ENCODE measurements at regions of chr6 and their contacts with region 1.

Region 1: GRCh38 chr6:40845553-40845952 is 193.5 kb downstream of the UNC5CL start:
- DNase-seq: no peak
- ATAC-seq: peak; percentile 74
- H3K4me3 ChIP-seq: no peak overlapping the region
- H3K27ac ChIP-seq: no peak overlapping the region
- H3K4me1 ChIP-seq: no peaks in the 10 kb centered on the region
- H3K27me3 ChIP-seq: peaks cover 2 to 10% of the 10 kb centered on the region in 2 experiments; a peak in 3 of 4 replicates
- CTCF ChIP-seq: peak; percentile 64 to 73 (median 66)
- EP300 ChIP-seq: no peak
- POLR2A ChIP-seq: no peak
- RAD21 ChIP-seq: peak; percentile 55

Region 2: DNA sequence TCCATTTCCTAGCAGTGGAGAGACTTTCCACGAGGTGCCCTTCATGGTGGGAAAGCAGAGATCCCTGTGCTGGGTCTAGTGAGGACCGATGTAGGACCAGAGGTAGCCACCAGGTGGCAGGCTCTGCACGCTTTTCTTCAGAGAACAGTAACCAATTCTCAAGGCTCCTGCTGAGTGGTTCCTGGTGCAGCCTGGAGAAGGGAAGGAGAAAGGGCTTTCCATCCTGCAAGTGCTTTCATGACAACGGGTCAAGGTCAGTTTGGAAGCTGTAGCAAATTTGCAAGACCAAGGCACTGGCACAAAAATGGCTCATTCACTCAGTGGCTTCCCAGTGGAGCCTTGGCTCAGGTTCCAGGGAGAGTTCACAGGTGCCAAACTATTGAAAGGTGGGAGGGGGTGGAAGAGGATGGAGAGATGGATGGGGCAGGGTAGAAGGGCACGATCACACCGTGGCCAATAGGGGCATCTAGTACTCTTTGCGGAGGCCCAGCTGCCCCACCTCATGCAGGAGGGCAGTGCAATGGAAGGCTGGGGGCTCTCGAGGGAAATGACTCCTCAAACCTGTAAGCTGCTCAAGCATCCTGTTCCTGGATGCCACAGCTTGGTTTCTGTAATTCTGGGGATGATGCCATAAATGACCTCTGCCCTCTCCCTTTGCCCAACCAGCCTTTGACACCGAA is 1497.5 kb before region 1 on chr6:
- CTCF ChIA-PET with region 1: no interaction called
- POLR2A ChIA-PET with region 1: no interaction called
- RAD21 ChIA-PET with region 1: no interaction called
- SMC1A ChIA-PET with region 1: no interaction called
- in situ Hi-C with region 1: no loop called
- intact Hi-C with region 1: loop called (anchors 5 kb)
- DNase-seq: no peak
- ATAC-seq: peak; percentile 96
- H3K4me3 ChIP-seq: no peak overlapping the region
- H3K27ac ChIP-seq: no peak overlapping the region
- H3K4me1 ChIP-seq: peaks cover 2% of the 10 kb centered on the region
- H3K27me3 ChIP-seq: no peaks in the 10 kb centered on the region
- CTCF ChIP-seq: peak; percentile 86 to 93 (median 92)
- EP300 ChIP-seq: no peak
- POLR2A ChIP-seq: no peak
- RAD21 ChIP-seq: peak; percentile 78

Region 3: GRCh38 chr6:39980839-39981580 is 864.5 kb before region 1 on chr6:
- CTCF ChIA-PET with region 1: interaction called, 10 read pairs
- POLR2A ChIA-PET with region 1: no interaction called
- RAD21 ChIA-PET with region 1: no interaction called
- SMC1A ChIA-PET with region 1: interaction called, 4 read pairs
- in situ Hi-C with region 1: no loop called
- intact Hi-C with region 1: no loop called
- DNase-seq: no peak
- ATAC-seq: peak; percentile 79
- H3K4me3 ChIP-seq: no peak overlapping the region
- H3K27ac ChIP-seq: no peak overlapping the region
- H3K4me1 ChIP-seq: no peaks in the 10 kb centered on the region
- H3K27me3 ChIP-seq: no peaks in the 10 kb centered on the region; a peak in 1 of 4 replicates
- CTCF ChIP-seq: peak; percentile 22 to 68 (median 30); a peak in 4 of 6 replicates
- EP300 ChIP-seq: no peak
- POLR2A ChIP-seq: no peak
- RAD21 ChIP-seq: peak; percentile 62

Region 4: DNA sequence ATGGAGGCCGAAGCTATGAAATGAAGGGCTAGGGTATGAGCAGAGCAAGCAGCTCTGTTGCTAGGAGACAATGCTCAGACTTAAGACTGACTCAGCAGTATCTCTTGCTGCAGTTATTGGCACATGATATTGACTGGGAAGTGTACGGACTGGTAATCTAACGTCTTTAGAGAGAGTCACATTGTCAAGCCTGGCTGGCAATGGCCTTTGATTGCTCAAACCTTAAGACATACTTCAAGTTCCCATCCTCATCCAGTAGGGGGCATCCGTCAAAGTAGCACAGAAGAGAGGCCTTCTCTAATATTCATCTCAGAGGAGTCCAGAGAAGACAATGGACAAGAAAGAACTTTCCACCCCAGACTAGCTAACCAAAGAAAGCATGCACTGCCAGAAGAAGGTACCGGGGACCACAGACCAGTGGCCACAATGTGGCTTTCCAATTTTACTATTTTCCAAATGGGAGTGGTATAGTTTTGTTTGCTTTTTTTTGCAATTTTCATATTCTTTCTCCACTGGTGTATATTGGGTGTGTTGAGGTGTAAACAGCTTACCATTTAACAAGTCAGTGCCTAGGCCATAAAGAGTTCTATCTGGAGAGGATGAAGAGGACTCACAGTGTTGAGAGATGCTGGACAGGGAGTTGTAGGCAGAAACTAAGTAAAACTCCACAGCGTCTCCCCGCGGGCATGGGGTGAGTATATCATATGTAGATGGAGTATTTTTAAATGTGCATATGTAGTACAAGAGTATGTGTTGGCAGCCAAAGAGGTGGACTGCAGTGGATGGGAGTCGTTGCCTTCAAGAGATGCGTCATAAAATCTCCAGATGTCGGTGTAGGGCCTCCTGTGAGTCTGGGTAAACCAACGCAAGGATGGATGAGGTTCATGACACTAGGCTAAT is 295.1 kb before region 1 on chr6:
- CTCF ChIA-PET with region 1: interaction called, 5 read pairs
- POLR2A ChIA-PET with region 1: no interaction called
- RAD21 ChIA-PET with region 1: interaction called, 3 read pairs
- SMC1A ChIA-PET with region 1: no interaction called
- in situ Hi-C with region 1: no loop called
- intact Hi-C with region 1: loop called (anchors 10 kb)
- DNase-seq: no peak
- ATAC-seq: peak; percentile 82
- H3K4me3 ChIP-seq: no peak overlapping the region
- H3K27ac ChIP-seq: no peak overlapping the region
- H3K4me1 ChIP-seq: no peaks in the 10 kb centered on the region
- H3K27me3 ChIP-seq: no peaks in the 10 kb centered on the region; a peak in 3 of 4 replicates
- CTCF ChIP-seq: peak; percentile 51 to 79 (median 68)
- EP300 ChIP-seq: no peak
- POLR2A ChIP-seq: no peak
- RAD21 ChIP-seq: peak; percentile 51

Region 5: GRCh38 chr6:40672097-40672496 is 173.5 kb before region 1 on chr6:
- CTCF ChIA-PET with region 1: no interaction called
- POLR2A ChIA-PET with region 1: no interaction called
- RAD21 ChIA-PET with region 1: no interaction called
- SMC1A ChIA-PET with region 1: no interaction called
- in situ Hi-C with region 1: no loop called
- intact Hi-C with region 1: loop called (anchors 5 kb)
- DNase-seq: no peak
- ATAC-seq: no peak
- H3K4me3 ChIP-seq: no peak overlapping the region
- H3K27ac ChIP-seq: no peak overlapping the region
- H3K4me1 ChIP-seq: no peaks in the 10 kb centered on the region
- H3K27me3 ChIP-seq: no peaks in the 10 kb centered on the region; a peak in 2 of 4 replicates
- CTCF ChIP-seq: peak in 1 of 3 experiments; percentile 8; a peak in 1 of 6 replicates
- EP300 ChIP-seq: no peak
- POLR2A ChIP-seq: no peak
- RAD21 ChIP-seq: no peak

Region 6: DNA sequence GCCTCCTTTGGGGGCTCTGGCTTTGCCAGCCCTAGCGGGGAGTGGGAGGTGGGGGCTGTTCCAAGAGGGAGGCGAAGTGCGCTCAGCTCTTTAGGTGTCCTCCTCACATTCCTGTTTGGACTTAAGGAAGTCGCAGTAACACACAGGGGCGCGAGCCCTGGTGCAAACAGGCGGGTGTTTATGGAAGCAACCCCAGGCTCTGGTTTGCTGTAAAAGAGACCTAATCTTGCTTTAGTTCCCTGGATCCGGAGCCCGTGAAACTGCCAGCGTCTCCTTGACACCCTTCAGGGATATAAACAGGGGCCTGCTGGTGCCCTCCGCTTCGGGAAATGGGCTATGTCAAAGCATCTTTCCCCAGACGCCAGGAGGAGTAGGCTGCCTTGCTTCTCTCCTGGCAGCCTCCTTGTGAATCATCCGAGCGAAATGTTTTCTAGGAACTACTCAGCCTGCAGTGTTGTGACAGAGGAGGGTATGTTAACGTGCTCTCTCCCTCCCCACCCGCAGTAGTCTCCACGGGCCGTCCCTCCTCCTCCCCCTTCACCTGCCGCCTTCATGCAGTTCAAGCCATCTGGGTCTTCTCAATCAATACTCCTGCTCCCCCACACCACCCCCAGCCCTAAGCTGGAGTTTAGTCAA is 90.4 kb before region 1 on chr6:
- CTCF ChIA-PET with region 1: no interaction called
- POLR2A ChIA-PET with region 1: no interaction called
- RAD21 ChIA-PET with region 1: no interaction called
- SMC1A ChIA-PET with region 1: no interaction called
- in situ Hi-C with region 1: no loop called
- intact Hi-C with region 1: no loop called
- DNase-seq: no peak
- ATAC-seq: no peak
- H3K4me3 ChIP-seq: no peak overlapping the region
- H3K27ac ChIP-seq: no peak overlapping the region
- H3K4me1 ChIP-seq: no peaks in the 10 kb centered on the region
- H3K27me3 ChIP-seq: peaks cover 4 to 23% of the 10 kb centered on the region in 2 experiments
- CTCF ChIP-seq: no peak
- EP300 ChIP-seq: no peak
- POLR2A ChIP-seq: no peak
- RAD21 ChIP-seq: no peak

Region 7: GRCh38 chr6:40822619-40823018 is 22.9 kb before region 1 on chr6:
- CTCF ChIA-PET with region 1: interaction called, 19 read pairs
- POLR2A ChIA-PET with region 1: no interaction called
- RAD21 ChIA-PET with region 1: no interaction called
- SMC1A ChIA-PET with region 1: no interaction called
- in situ Hi-C with region 1: no loop called
- intact Hi-C with region 1: no loop called
- DNase-seq: no peak
- ATAC-seq: no peak
- H3K4me3 ChIP-seq: no peak overlapping the region
- H3K27ac ChIP-seq: no peak overlapping the region
- H3K4me1 ChIP-seq: no peaks in the 10 kb centered on the region
- H3K27me3 ChIP-seq: peaks cover 0 to 2% of the 10 kb centered on the region in 2 experiments; a peak in 2 of 4 replicates
- CTCF ChIP-seq: no peak
- EP300 ChIP-seq: no peak
- POLR2A ChIP-seq: no peak
- RAD21 ChIP-seq: no peak

Region 8: DNA sequence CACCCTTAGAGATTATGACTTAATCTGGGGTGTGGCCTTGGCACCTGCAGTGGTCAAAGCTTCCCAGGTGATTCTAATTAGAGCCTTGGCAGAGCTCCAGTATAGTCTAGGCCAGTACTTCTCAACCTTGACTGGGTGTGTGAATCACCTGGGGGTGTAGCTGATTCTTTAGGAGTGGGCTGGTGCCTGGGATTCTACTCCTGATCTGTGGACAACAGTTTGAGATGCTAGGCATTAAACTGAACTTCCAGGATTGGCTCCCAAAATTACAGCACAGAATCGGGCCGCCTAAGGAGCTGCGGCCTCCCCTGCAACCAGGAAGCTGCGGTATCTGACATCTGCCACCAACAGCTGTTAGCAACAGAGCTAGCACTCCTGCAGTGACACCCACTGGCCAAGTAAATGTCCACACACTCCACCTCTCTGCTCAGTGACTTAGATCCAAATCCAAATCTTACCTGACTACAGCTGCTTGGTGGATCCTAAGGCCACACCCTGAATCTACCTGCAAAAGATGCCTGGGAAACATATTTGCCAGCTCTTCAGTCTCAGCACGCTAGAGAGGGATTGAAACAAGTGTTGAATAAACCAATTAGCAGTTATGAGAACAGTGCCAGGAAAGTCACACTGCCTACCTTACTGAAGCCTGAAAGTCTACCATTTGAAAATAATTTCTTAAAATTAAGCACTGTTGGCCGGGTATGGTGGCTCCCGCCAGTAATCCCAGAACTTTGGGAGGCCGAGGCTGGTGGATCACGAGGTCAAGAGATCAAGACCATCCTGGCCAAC is 66.8 kb after region 1 on chr6:
- CTCF ChIA-PET with region 1: interaction called, 23 read pairs
- POLR2A ChIA-PET with region 1: no interaction called
- RAD21 ChIA-PET with region 1: no interaction called
- SMC1A ChIA-PET with region 1: no interaction called
- in situ Hi-C with region 1: no loop called
- intact Hi-C with region 1: no loop called
- DNase-seq: peak; percentile 19
- ATAC-seq: peak; percentile 100
- H3K4me3 ChIP-seq: no peak overlapping the region
- H3K27ac ChIP-seq: no peak overlapping the region
- H3K4me1 ChIP-seq: no peaks in the 10 kb centered on the region
- H3K27me3 ChIP-seq: no peaks in the 10 kb centered on the region; a peak in 1 of 4 replicates
- CTCF ChIP-seq: peak; percentile 71 to 83 (median 73)
- EP300 ChIP-seq: peak in 1 of 2 experiments; percentile 30; a peak in 1 of 4 replicates
- POLR2A ChIP-seq: no peak
- RAD21 ChIP-seq: peak; percentile 71

Measured in GM12878 (cell line).